AG04449 (cell line): ENCODE measurements at regions of chr10 and their contacts with region 1.

Region 1: DNA sequence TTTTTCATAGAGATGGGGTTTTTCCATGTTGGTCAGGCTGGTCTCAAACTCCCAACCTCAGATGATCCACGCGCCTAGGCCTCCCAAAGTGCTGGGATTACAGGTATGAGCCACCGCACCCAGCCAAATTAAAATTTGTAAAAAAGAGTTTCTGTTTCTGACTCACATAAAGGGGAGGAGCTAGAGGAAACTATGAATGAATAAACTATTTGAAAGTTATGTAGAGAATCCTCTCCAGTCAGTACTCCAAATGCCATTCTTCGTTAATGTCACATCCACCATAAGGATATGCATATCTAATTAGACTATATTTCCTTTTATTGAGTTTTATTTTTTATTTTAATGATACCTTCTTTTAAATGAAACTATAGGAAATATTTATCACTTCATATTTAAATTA is 52.6 kb downstream of the MBL2 start:
- DNase-seq: no peak
- H3K4me3 ChIP-seq: no peak overlapping the region
- CTCF ChIP-seq: no peak

Region 2: DNA sequence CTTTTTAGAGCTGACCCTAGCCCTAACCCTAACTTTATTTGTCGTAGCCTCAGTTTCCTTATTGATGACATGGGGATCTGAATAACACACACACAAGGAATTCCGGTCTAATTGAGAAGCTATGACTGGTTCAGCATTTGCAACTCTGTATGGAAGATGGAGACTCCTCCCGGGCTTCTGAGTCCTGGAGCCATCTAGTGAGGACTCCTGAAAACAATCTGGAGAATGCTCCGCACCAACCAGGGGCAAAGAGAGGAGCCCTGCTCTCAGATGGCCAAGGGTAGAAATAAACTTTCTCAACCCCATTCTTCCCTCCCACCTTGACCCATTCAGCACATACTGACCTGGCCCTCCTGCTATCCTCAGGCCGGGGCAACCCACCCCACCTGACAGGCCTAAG is 26.2 kb after region 1 on chr10:
- CTCF ChIA-PET with region 1: interaction called, 11 read pairs
- POLR2A ChIA-PET with region 1: no interaction called
- DNase-seq: no peak
- H3K4me3 ChIP-seq: no peak overlapping the region
- CTCF ChIP-seq: peak; percentile 47